ENCODE measurements at regions of chr19 and their contacts with region 1.

Region 1: GRCh38 chr19:572140-572742 is at the start of gene BSG:
- DNase-seq: peak; percentile 93 to 100 (median 96)
- ATAC-seq: peak; percentile 79
- H3K4me3 ChIP-seq: peak within 1 kb of the TSS; percentile 99
- H3K27ac ChIP-seq: peak within 1 kb of the TSS; percentile 94
- H3K4me1 ChIP-seq: peaks cover 28 to 70% of the 10 kb centered on the region in 2 experiments
- H3K27me3 ChIP-seq: no peaks in the 10 kb centered on the region
- CTCF ChIP-seq: no peak
- EP300 ChIP-seq: peak; percentile 49
- POLR2A ChIP-seq: peak; percentile 97
- RAD21 ChIP-seq: no peak
- polyA plus RNA-seq, gene BSG: 4.6 to 17.9 TPM

Region 2: GRCh38 chr19:426725-427445 is 145.4 kb before region 1 on chr19:
- CTCF ChIA-PET with region 1: no interaction called
- POLR2A ChIA-PET with region 1: no interaction called
- in situ Hi-C with region 1: no loop called
- intact Hi-C with region 1: no loop called
- DNase-seq: no peak
- ATAC-seq: no peak
- H3K4me3 ChIP-seq: no peak overlapping the region
- H3K27ac ChIP-seq: no peak overlapping the region
- H3K4me1 ChIP-seq: peaks cover 0 to 18% of the 10 kb centered on the region in 2 experiments; a peak in 1 of 5 replicates
- H3K27me3 ChIP-seq: peaks cover 5 to 47% of the 10 kb centered on the region in 2 experiments; a peak in 4 of 5 replicates
- CTCF ChIP-seq: no peak
- EP300 ChIP-seq: no peak
- POLR2A ChIP-seq: no peak
- RAD21 ChIP-seq: no peak

Region 3: DNA sequence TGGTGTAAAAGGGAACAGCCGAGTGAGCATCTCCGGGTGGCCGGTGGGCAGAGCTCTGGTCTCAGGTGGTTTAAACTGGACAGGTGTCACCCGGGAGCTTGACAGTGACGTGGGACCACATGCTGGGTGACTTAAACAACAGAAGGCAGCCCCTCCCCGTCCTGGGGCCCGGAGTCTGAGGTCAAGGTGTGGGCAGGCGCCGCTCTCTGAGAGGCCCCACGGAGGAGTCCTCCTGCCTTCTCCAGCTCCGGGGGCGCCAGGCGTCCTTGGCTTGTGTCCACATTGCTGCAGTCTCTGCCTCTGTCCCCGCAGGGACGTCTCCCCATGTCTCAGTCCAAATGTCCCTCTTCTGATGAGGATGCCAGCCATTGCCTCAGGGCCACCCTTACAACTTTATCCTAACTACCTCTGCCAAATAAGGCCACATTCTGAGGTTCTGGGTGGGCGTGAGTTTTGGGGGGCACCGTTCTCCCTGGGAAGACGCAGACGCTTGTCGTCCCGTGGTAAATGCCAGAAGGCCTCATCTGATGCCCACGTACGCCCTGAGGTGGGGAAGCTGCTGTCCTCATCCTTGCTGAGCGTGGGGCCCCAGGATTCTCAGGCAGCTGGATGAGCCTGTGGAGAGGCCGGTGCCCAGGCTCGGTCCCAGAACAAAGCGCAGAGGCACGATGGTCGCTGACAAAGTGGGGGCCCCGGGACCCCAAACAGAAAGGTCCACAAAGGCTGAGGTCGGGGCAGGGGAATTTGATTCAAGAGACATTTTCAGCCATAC is 15.4 kb before region 1 on chr19:
- CTCF ChIA-PET with region 1: no interaction called
- POLR2A ChIA-PET with region 1: interaction called, 20 read pairs
- in situ Hi-C with region 1: no loop called
- intact Hi-C with region 1: loop called (anchors 1 kb)
- DNase-seq: peak; percentile 48 to 81 (median 61)
- ATAC-seq: peak; percentile 55
- H3K4me3 ChIP-seq: peak overlapping the region; percentile 2; the same call in 1 of the 2 replicates
- H3K27ac ChIP-seq: peak overlapping the region; percentile 83
- H3K4me1 ChIP-seq: peaks cover 22 to 62% of the 10 kb centered on the region in 2 experiments; a peak in 4 of 5 replicates
- H3K27me3 ChIP-seq: no peaks in the 10 kb centered on the region
- CTCF ChIP-seq: no peak
- EP300 ChIP-seq: no peak
- POLR2A ChIP-seq: no peak
- RAD21 ChIP-seq: no peak

Region 4: GRCh38 chr19:588093-588740 is 16.0 kb after region 1 on chr19:
- CTCF ChIA-PET with region 1: no interaction called
- POLR2A ChIA-PET with region 1: interaction called, 41 read pairs
- in situ Hi-C with region 1: no loop called
- intact Hi-C with region 1: no loop called
- DNase-seq: peak; percentile 39 to 76 (median 48)
- ATAC-seq: peak; percentile 61
- H3K4me3 ChIP-seq: no peak overlapping the region
- H3K27ac ChIP-seq: no peak overlapping the region
- H3K4me1 ChIP-seq: peaks cover 3 to 89% of the 10 kb centered on the region in 2 experiments; a peak in 3 of 5 replicates
- H3K27me3 ChIP-seq: peaks cover 0 to 13% of the 10 kb centered on the region in 2 experiments; a peak in 2 of 5 replicates
- CTCF ChIP-seq: peak; percentile 54 to 65 (median 64)
- EP300 ChIP-seq: no peak
- POLR2A ChIP-seq: no peak
- RAD21 ChIP-seq: 0 out of 4 replicates have a peak, but pooled peaks of 1 of the 2 experiments have one; percentile 18

Region 5: DNA sequence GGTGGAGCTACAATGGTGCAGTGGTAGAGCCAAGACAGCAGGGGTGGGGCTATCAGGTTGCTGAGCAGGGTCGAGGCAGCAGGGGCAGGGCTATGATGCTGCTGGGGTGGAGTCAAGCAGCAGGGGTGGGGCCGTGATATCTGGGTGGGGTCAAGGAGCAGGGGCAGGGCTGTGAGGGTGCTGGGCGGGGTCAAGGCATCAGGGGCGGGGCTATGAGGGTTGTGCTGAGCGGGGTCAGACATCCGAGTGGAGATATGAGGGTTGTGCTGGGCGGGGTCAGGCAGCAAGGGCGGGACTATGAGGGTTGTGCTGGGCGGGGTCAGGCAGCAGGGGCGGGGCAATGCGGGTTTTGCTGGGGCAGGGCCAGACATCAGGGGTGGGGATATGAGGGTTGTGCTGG is 32.1 kb after region 1 on chr19:
- CTCF ChIA-PET with region 1: no interaction called
- POLR2A ChIA-PET with region 1: interaction called, 4 read pairs
- in situ Hi-C with region 1: no loop called
- intact Hi-C with region 1: loop called (anchors 2 kb)
- DNase-seq: peak; percentile 76 to 86 (median 82)
- ATAC-seq: peak; percentile 96
- H3K4me3 ChIP-seq: no peak overlapping the region
- H3K27ac ChIP-seq: no peak overlapping the region
- H3K4me1 ChIP-seq: peaks cover 0 to 51% of the 10 kb centered on the region in 2 experiments; a peak in 2 of 5 replicates
- H3K27me3 ChIP-seq: no peaks in the 10 kb centered on the region
- CTCF ChIP-seq: no peak
- EP300 ChIP-seq: no peak
- POLR2A ChIP-seq: no peak
- RAD21 ChIP-seq: no peak

Region 6: DNA sequence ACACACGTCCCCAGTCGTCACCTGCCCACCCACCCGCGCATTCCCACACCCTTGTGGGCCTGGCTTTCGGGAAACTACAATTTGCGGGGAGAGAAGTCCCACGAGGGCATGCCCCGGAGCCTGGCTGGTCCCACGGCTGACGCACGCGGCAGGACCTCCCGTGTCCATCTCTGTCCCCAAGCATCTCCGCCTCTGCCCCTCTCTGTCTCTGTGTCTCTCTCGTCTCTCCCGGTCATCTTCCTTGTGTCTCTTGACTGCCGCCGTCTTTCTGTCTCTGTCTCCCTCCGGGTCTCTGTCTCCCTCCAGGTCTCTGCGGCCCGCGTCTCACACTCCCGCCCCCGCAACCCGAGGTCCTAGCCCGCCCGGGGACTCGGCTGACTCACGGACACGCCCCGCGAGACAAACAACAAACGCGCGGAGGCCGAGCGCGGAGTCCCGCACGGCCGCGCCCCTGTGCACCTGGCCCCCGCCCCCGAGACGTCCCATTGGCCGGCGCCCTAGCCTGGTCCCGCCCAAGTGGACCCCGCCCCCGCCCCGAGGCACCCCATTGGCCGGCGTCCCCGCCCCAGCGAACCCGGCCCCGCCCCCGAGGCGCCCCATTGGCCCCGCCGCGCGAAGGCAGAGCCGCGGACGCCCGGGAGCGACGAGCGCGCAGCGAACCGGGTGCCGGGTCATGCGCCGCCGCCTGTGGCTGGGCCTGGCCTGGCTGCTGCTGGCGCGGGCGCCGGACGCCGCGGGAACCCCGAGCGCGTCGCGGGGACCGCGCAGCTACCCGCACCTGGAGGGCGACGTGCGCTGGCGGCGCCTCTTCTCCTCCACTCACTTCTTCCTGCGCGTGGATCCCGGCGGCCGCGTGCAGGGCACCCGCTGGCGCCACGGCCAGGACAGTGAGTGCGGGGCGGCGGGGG is 67.3 kb after region 1 on chr19 and contains the start of gene FGF22:
- CTCF ChIA-PET with region 1: no interaction called
- POLR2A ChIA-PET with region 1: no interaction called
- in situ Hi-C with region 1: no loop called
- intact Hi-C with region 1: no loop called
- DNase-seq: peak; percentile 95 to 99 (median 99)
- ATAC-seq: peak; percentile 98
- H3K4me3 ChIP-seq: peak within 1 kb of the TSS; percentile 47
- H3K27ac ChIP-seq: peak within 1 kb of the TSS; percentile 31; the same call in 1 of the 3 replicates
- H3K4me1 ChIP-seq: peaks cover 4 to 57% of the 10 kb centered on the region in 2 experiments; a peak in 4 of 5 replicates
- H3K27me3 ChIP-seq: no peaks in the 10 kb centered on the region
- CTCF ChIP-seq: no peak
- EP300 ChIP-seq: no peak
- POLR2A ChIP-seq: peak; percentile 41; the same call in 1 of the 2 replicates
- RAD21 ChIP-seq: no peak
- polyA plus RNA-seq, gene FGF22: not detected

Measured in K562 (cell line).